SK-N-SH (cell line): ENCODE measurements at regions of chr2 and their contacts with region 1.

Region 1: DNA sequence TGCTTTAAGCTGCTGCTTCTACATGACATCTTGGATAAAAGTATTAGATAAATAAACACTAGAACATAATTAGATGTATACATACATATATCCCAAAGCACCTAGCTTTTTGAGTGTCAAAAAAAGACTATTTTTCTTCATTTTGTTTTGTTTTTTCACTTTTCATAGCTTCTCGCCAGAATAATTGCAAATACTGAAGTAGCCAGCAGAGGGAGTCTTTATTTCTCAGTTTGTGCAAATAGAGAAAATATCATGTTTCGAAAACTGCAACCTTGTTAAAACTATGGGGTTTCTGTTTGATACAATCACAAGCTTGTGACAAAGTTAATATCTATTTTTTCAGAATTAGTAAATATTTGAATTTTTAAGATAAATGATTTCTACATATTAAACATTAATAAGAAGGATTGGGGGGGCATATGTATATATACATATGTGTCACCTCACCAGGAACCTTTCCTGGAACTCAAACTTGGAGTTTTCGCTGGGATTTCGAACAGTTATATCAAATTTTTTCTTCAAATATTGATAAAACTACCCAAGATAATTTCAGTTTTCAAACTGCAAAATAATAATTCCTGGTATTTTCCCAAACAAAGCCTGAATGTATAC is 61.0 kb downstream of the GRB14 start:
- DNase-seq: peak; percentile 10
- H3K4me3 ChIP-seq: no peak overlapping the region
- H3K27ac ChIP-seq: no peak overlapping the region
- H3K4me1 ChIP-seq: no peaks in the 10 kb centered on the region; a peak in 1 of 4 replicates
- H3K27me3 ChIP-seq: no peaks in the 10 kb centered on the region
- CTCF ChIP-seq: peak; percentile 86
- EP300 ChIP-seq: no peak
- RAD21 ChIP-seq: peak; percentile 69

Region 2: DNA sequence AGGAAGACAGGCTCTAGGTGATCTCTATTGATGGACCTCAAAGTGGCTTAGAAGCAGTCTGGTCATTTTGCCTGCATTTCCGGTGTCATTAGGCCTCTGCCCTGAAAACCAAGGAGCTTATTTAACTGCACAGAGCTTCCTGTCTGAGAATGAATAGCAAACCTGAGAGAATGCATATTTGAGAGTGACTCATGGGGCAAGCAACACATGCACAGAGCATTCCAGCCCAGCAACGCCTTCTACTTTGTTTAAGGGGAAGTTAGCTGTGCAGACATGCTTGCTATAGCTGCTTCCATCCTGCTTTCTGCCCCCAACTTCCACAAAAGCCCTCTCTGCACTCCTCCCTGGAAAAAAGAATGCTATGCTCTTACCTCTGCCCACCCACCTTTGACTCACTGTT is 171.8 kb before region 1 on chr2:
- CTCF ChIA-PET with region 1: no interaction called
- POLR2A ChIA-PET with region 1: no interaction called
- DNase-seq: no peak
- H3K4me3 ChIP-seq: no peak overlapping the region
- H3K27ac ChIP-seq: peak overlapping the region in 1 of 2 experiments; percentile 53; a peak in 1 of 4 replicates
- H3K4me1 ChIP-seq: peaks cover 0 to 10% of the 10 kb centered on the region in 2 experiments; a peak in 2 of 4 replicates
- H3K27me3 ChIP-seq: no peaks in the 10 kb centered on the region
- CTCF ChIP-seq: no peak
- EP300 ChIP-seq: no peak
- RAD21 ChIP-seq: no peak

Region 3: GRCh38 chr2:164545484-164545883 is 14.8 kb before region 1 on chr2:
- CTCF ChIA-PET with region 1: interaction called, 15 read pairs
- POLR2A ChIA-PET with region 1: no interaction called
- DNase-seq: no peak
- H3K4me3 ChIP-seq: no peak overlapping the region
- H3K27ac ChIP-seq: no peak overlapping the region
- H3K4me1 ChIP-seq: peaks cover 0 to 7% of the 10 kb centered on the region in 2 experiments; a peak in 2 of 4 replicates
- H3K27me3 ChIP-seq: no peaks in the 10 kb centered on the region
- CTCF ChIP-seq: no peak
- EP300 ChIP-seq: no peak
- RAD21 ChIP-seq: no peak

Region 4: DNA sequence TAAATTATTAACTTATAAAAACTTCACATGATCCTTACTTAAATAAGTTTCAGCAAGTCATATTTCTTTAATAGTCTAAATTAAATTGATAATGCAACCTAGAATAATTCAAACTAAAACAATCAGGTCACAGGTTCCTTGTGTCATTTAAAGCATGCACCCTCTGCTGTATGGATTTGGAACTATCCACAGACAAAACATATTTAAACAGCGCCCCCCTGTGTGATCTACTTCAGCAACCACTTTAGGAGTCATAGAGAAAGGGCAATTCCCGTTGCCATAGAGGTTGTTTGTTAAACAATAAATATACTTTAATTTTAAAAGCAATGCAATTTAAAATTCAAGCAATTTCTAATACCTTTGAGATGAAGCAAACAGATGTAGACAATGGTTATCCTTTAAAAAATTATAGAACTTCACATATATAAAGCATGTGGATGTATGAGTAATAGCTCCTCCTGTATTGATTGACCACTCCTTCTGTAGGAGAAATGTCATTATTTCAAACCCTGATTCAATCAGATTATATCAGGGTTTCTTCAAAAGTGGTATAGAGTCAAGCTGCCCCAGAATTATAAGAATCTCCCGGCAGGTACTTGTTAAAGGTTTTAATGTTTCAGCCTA is 39.8 kb after region 1 on chr2:
- CTCF ChIA-PET with region 1: interaction called, 48 read pairs
- POLR2A ChIA-PET with region 1: no interaction called
- DNase-seq: peak; percentile 55
- H3K4me3 ChIP-seq: peak overlapping the region in 1 of 2 experiments; percentile 38; a peak in 1 of 4 replicates
- H3K27ac ChIP-seq: peak overlapping the region in 1 of 2 experiments; percentile 18; a peak in 1 of 4 replicates
- H3K4me1 ChIP-seq: no peaks in the 10 kb centered on the region
- H3K27me3 ChIP-seq: no peaks in the 10 kb centered on the region
- CTCF ChIP-seq: peak; percentile 98
- EP300 ChIP-seq: no peak
- RAD21 ChIP-seq: peak; percentile 79

Region 5: DNA sequence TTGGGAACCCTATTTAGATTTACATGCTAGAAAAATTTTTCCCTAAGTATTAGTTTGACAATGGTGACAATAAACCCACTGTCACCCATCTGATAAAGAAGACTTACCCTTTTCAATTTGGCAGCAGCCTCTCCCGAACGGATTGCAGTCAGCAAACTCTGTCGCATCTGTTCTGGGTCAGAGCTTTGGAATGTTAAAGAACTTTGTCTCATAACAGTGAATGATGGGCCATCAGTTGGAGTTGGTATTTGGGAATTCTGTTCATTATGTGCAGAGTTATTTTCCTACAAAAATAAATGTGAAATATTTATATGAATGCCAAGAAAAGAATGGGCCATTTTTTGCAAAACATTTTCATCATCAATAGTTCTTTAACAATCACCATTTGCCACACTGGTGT is 131.8 kb after region 1 on chr2:
- CTCF ChIA-PET with region 1: interaction called, 12 read pairs
- POLR2A ChIA-PET with region 1: no interaction called
- DNase-seq: no peak
- H3K4me3 ChIP-seq: no peak overlapping the region
- H3K27ac ChIP-seq: peak overlapping the region; percentile 64 to 85; a peak in 3 of 4 replicates
- H3K4me1 ChIP-seq: peaks cover 3 to 26% of the 10 kb centered on the region in 2 experiments; a peak in 3 of 4 replicates
- H3K27me3 ChIP-seq: no peaks in the 10 kb centered on the region
- CTCF ChIP-seq: no peak
- EP300 ChIP-seq: peak in 1 of 2 experiments; percentile 62; a peak in 1 of 4 replicates
- RAD21 ChIP-seq: no peak

Region 6: DNA sequence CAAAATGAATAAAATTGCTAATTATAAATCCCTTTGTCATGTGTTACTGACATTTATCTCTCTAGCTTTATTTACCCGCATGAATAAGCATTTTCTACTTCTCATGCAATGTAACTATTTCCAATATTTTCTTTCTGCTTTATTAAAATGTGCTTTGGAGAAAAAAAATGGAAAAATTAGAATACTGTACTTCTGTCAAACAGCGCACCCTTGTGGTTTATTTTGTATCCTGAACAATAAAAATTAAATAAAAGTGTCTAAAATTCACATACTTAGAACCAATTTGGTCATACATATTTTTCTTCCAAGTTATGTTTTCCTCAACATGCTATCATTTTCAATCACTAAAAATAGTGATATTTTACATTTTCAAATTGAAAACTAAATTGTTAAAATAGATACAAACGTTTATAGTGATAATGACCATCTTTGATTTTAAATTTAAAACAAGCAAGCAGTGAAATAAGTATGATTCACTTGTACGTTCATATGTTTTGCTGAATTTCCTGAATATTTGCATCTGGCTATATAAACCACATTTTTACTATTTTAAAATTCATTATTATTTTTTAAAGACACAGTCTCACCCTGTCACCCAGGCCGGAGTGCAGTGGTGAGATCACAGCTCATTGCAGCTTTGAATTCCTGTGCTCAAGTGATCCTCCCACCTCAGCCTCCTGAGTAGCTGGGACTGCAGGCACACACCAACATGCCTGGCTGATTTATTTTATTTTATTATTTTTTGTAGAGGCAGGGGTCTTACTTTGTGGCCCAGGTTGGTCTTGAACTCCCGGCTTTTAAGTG is 156.9 kb after region 1 on chr2:
- CTCF ChIA-PET with region 1: interaction called, 39 read pairs
- POLR2A ChIA-PET with region 1: no interaction called
- DNase-seq: no peak
- H3K4me3 ChIP-seq: no peak overlapping the region
- H3K27ac ChIP-seq: no peak overlapping the region
- H3K4me1 ChIP-seq: peaks cover 3 to 6% of the 10 kb centered on the region in 2 experiments; a peak in 3 of 4 replicates
- H3K27me3 ChIP-seq: no peaks in the 10 kb centered on the region
- CTCF ChIP-seq: peak; percentile 83
- EP300 ChIP-seq: no peak
- RAD21 ChIP-seq: peak; percentile 76

Region 7: GRCh38 chr2:164768662-164769061 is 208.4 kb after region 1 on chr2:
- CTCF ChIA-PET with region 1: no interaction called
- POLR2A ChIA-PET with region 1: no interaction called
- DNase-seq: no peak
- H3K4me3 ChIP-seq: no peak overlapping the region
- H3K27ac ChIP-seq: no peak overlapping the region
- H3K4me1 ChIP-seq: no peaks in the 10 kb centered on the region; a peak in 2 of 4 replicates
- H3K27me3 ChIP-seq: no peaks in the 10 kb centered on the region
- CTCF ChIP-seq: no peak
- EP300 ChIP-seq: no peak
- RAD21 ChIP-seq: peak; percentile 37